GM12878 (cell line): ENCODE measurements at regions of chr12 and their contacts with region 1.

Region 1: GRCh38 chr12:84507956-84508850 is 404.4 kb downstream of the SLC6A15 start:
- DNase-seq: no peak
- ATAC-seq: peak; percentile 73
- H3K4me3 ChIP-seq: no peak overlapping the region
- H3K27ac ChIP-seq: no peak overlapping the region
- H3K4me1 ChIP-seq: no peaks in the 10 kb centered on the region
- H3K27me3 ChIP-seq: no peaks in the 10 kb centered on the region
- CTCF ChIP-seq: no peak; a peak in 1 of 6 replicates
- EP300 ChIP-seq: no peak
- POLR2A ChIP-seq: no peak
- RAD21 ChIP-seq: no peak

Region 2: DNA sequence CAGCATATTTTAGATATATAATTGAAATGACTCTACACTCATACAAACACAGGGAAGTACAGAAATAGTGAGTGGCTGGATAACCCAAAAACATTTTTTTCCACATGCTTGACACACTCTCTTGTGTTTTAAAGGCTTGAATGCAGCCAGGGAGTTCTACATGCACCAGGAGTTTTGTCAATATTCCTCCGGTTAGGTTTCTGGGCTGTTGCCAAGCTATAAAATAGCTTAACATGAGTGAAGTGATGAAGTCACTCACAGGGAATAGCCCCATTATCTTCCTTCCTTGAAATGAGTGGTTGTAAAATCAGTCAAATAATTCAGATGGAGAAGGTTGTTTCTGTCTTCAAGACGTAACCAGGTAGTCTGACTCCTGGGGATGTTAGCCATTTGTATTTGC is 178.3 kb before region 1 on chr12:
- CTCF ChIA-PET with region 1: no interaction called
- POLR2A ChIA-PET with region 1: no interaction called
- RAD21 ChIA-PET with region 1: no interaction called
- SMC1A ChIA-PET with region 1: no interaction called
- in situ Hi-C with region 1: no loop called
- intact Hi-C with region 1: no loop called
- DNase-seq: no peak
- ATAC-seq: no peak
- H3K4me3 ChIP-seq: no peak overlapping the region
- H3K27ac ChIP-seq: no peak overlapping the region
- H3K4me1 ChIP-seq: no peaks in the 10 kb centered on the region
- H3K27me3 ChIP-seq: no peaks in the 10 kb centered on the region
- CTCF ChIP-seq: no peak
- EP300 ChIP-seq: no peak
- POLR2A ChIP-seq: no peak
- RAD21 ChIP-seq: no peak

Region 3: DNA sequence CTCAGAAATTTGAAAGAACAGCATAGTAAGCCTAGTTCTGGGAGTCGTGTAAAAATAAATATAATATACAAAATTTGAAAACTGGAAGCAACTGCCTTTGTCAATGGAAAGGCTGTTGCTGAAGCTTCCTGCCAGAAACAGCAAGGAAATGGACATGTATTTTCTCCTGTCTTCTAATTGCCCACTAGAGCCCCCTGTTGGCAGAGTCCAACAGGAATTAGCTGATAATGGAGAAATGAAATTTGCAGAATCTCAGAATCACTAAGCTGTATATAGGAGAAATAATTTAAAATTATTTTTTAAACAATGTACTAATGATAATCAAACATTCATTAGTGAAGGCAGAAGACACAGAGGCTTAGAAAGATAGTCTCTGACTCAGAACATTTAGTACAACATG is 10.4 kb before region 1 on chr12:
- CTCF ChIA-PET with region 1: interaction called, 22 read pairs
- POLR2A ChIA-PET with region 1: interaction called, 3 read pairs
- RAD21 ChIA-PET with region 1: no interaction called
- SMC1A ChIA-PET with region 1: no interaction called
- in situ Hi-C with region 1: no loop called
- intact Hi-C with region 1: no loop called
- DNase-seq: no peak
- ATAC-seq: peak; percentile 47; the same call in 2 of the 3 replicates
- H3K4me3 ChIP-seq: no peak overlapping the region
- H3K27ac ChIP-seq: no peak overlapping the region
- H3K4me1 ChIP-seq: no peaks in the 10 kb centered on the region
- H3K27me3 ChIP-seq: no peaks in the 10 kb centered on the region; a peak in 1 of 4 replicates
- CTCF ChIP-seq: peak; percentile 47 to 59 (median 56); a peak in 5 of 6 replicates
- EP300 ChIP-seq: no peak
- POLR2A ChIP-seq: no peak
- RAD21 ChIP-seq: peak; percentile 63